ENCODE measurements at regions of chr20 and their contacts with region 1.

Region 1: GRCh38 chr20:19729672-19730071 is 28.4 kb upstream of the RIN2 start:
- DNase-seq: no peak
- H3K4me3 ChIP-seq: no peak overlapping the region
- H3K27ac ChIP-seq: no peak overlapping the region
- H3K4me1 ChIP-seq: peaks cover 10% of the 10 kb centered on the region
- H3K27me3 ChIP-seq: no peaks in the 10 kb centered on the region
- CTCF ChIP-seq: no peak
- POLR2A ChIP-seq: no peak

Region 2: DNA sequence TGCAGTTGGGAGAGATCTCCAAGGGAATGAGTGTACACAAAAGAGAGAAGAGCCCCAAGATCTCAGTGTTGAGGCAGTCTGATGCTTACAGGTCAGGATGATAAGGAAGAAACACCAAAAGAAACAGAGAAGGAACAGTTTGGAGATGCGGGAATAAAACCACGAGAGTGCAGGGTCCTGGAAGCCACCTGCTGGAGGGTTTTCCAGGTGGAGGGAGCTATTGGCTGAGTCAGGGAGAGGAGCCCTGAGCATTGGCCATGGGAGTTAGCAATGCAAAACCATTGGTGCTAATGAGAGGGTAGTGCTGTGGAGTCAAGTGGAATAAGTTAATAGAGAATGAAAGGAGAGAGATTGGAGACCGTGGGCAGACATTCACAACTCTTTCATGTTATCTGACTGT is 10.8 kb before region 1 on chr20:
- CTCF ChIA-PET with region 1: interaction called, 6 read pairs
- POLR2A ChIA-PET with region 1: no interaction called
- dilution Hi-C with region 1: no loop called
- intact Hi-C with region 1: loop called (anchors 1 kb)
- DNase-seq: no peak
- H3K4me3 ChIP-seq: no peak overlapping the region
- H3K27ac ChIP-seq: no peak overlapping the region
- H3K4me1 ChIP-seq: no peaks in the 10 kb centered on the region
- H3K27me3 ChIP-seq: peaks cover 3 to 7% of the 10 kb centered on the region in 2 experiments
- CTCF ChIP-seq: no peak
- POLR2A ChIP-seq: no peak

Measured in endothelial cell of umbilical vein (primary cell).